Endothelial cell of umbilical vein (primary cell): ENCODE measurements at regions of chr7 and their contacts with region 1.

Region 1: GRCh38 chr7:18570890-18571478 is 75.4 kb downstream of the HDAC9 start:
- DNase-seq: peak; percentile 72
- H3K4me3 ChIP-seq: no peak overlapping the region
- H3K27ac ChIP-seq: no peak overlapping the region
- H3K4me1 ChIP-seq: no peaks in the 10 kb centered on the region
- H3K27me3 ChIP-seq: no peaks in the 10 kb centered on the region
- CTCF ChIP-seq: peak; percentile 21 to 28
- POLR2A ChIP-seq: no peak

Region 2: DNA sequence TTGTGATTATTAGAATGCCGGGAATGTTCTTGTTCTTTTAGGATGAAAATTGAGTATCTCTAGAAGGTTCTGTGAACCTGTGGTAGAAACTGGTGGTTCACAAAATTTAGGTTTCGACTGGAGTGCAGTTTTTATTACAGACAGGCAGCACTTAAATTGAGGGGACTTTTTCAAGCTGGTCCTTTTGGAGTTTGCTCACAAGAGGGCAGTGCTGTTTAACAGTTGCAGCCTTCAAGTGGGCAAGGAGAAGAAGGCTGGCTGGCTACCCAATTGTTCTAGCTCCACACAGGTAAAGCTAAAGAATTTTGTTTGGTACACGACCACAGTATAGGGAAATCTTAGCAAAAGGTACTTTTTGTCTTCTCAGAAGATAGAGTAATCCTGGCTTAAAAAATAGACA is 864.2 kb before region 1 on chr7:
- CTCF ChIA-PET with region 1: interaction called, 12 read pairs
- POLR2A ChIA-PET with region 1: no interaction called
- dilution Hi-C with region 1: no loop called
- intact Hi-C with region 1: loop called (anchors 10 kb)
- DNase-seq: peak; percentile 74
- H3K4me3 ChIP-seq: no peak overlapping the region
- H3K27ac ChIP-seq: no peak overlapping the region
- H3K4me1 ChIP-seq: no peaks in the 10 kb centered on the region
- H3K27me3 ChIP-seq: peaks cover 3 to 6% of the 10 kb centered on the region in 2 experiments
- CTCF ChIP-seq: peak; percentile 48 to 64
- POLR2A ChIP-seq: no peak

Region 3: DNA sequence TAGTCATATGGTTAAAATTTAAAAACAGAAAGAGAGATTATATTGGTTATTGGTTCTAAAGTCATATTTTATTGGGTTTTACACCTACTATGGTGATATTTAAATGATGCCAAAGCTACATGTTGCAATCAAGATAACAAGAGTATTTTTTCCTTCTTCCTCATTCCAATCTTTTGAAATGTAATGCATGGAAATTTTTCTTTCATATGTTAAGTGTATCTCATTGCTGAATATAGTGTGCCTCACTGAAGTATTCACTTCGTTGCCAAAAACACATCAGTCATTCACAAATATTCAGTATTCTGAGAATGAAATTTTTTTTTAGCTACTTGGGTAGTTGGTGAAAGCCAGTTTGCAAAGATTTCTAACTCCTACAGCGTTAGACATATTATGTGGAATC is 55.9 kb before region 1 on chr7:
- CTCF ChIA-PET with region 1: interaction called, 15 read pairs
- POLR2A ChIA-PET with region 1: no interaction called
- dilution Hi-C with region 1: no loop called
- intact Hi-C with region 1: no loop called
- DNase-seq: no peak
- H3K4me3 ChIP-seq: no peak overlapping the region
- H3K27ac ChIP-seq: no peak overlapping the region
- H3K4me1 ChIP-seq: no peaks in the 10 kb centered on the region
- H3K27me3 ChIP-seq: no peaks in the 10 kb centered on the region
- CTCF ChIP-seq: no peak
- POLR2A ChIP-seq: no peak

Region 4: GRCh38 chr7:18583305-18583704 is 12.3 kb after region 1 on chr7:
- CTCF ChIA-PET with region 1: interaction called, 13 read pairs
- POLR2A ChIA-PET with region 1: no interaction called
- dilution Hi-C with region 1: no loop called
- intact Hi-C with region 1: no loop called
- DNase-seq: no peak
- H3K4me3 ChIP-seq: no peak overlapping the region
- H3K27ac ChIP-seq: no peak overlapping the region
- H3K4me1 ChIP-seq: no peaks in the 10 kb centered on the region
- H3K27me3 ChIP-seq: no peaks in the 10 kb centered on the region
- CTCF ChIP-seq: no peak
- POLR2A ChIP-seq: no peak